Activated CD4-positive, alpha-beta memory T cell treated with anti-CD3 and anti-CD28 coated beads for 36 hours (primary cell): ENCODE measurements at regions of chr16 and their contacts with region 1.

Region 1: DNA sequence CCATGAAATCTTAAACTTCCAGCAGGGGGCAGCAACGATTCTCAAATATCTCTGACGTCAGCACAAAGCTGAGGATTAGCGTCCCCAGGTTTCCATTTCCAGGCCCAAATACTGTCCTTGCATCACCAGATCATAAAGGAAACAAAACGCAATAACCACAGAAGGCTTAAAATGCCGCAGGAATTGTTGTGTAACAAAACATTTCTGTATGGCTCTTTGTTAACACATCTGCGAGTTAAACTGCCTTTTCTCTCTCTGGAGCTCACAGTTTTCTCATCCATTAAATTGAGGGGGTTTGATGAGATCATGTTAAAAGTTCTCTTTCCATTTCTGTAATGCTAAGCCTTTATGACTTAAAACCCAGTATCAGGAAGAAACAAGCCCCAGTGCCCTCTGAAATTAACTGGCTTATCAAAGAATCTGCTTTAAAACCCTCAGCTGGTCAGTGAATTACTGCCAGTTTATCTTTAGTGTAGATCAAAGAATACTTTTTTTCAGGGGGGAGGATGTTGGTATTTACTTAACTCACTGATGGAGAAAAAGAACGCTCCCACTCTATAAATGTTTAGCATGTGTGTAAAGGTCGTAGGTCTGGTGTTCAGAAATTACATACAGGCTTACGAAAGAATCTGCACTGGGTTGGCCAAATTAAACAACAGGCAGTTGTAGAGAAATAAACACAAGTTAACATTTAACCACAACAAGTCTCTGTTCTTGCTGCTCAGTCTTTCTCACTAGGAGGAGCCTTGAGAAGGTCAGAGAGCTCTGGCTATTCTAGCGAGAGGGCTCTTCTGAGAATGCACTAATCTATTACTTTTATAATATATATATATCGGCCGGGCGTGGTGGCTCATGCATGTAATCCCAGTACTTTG is 10.6 kb upstream of the TERF2 start:
- DNase-seq: peak; percentile 74
- H3K4me3 Mint-ChIP-seq: no peak overlapping the region
- H3K27ac Mint-ChIP-seq: peak overlapping the region; percentile 58
- H3K4me1 Mint-ChIP-seq: peaks cover 11% of the 10 kb centered on the region
- H3K27me3 Mint-ChIP-seq: peaks cover 2% of the 10 kb centered on the region

Region 2: GRCh38 chr16:68995011-68995504 is 401.4 kb before region 1 on chr16:
- CTCF ChIA-PET with region 1: no interaction called
- POLR2A ChIA-PET with region 1: no interaction called
- intact Hi-C with region 1: no loop called
- DNase-seq: no peak
- H3K4me3 Mint-ChIP-seq: no peak overlapping the region
- H3K27ac Mint-ChIP-seq: no peak overlapping the region
- H3K4me1 Mint-ChIP-seq: no peaks in the 10 kb centered on the region
- H3K27me3 Mint-ChIP-seq: no peaks in the 10 kb centered on the region

Region 3: GRCh38 chr16:69381231-69381630 is 15.2 kb before region 1 on chr16:
- CTCF ChIA-PET with region 1: interaction called, 17 read pairs
- POLR2A ChIA-PET with region 1: interaction called, 3 read pairs
- intact Hi-C with region 1: no loop called
- DNase-seq: no peak
- H3K4me3 Mint-ChIP-seq: no peak overlapping the region
- H3K27ac Mint-ChIP-seq: peak overlapping the region; percentile 38
- H3K4me1 Mint-ChIP-seq: peaks cover 53% of the 10 kb centered on the region
- H3K27me3 Mint-ChIP-seq: no peaks in the 10 kb centered on the region

Region 4: DNA sequence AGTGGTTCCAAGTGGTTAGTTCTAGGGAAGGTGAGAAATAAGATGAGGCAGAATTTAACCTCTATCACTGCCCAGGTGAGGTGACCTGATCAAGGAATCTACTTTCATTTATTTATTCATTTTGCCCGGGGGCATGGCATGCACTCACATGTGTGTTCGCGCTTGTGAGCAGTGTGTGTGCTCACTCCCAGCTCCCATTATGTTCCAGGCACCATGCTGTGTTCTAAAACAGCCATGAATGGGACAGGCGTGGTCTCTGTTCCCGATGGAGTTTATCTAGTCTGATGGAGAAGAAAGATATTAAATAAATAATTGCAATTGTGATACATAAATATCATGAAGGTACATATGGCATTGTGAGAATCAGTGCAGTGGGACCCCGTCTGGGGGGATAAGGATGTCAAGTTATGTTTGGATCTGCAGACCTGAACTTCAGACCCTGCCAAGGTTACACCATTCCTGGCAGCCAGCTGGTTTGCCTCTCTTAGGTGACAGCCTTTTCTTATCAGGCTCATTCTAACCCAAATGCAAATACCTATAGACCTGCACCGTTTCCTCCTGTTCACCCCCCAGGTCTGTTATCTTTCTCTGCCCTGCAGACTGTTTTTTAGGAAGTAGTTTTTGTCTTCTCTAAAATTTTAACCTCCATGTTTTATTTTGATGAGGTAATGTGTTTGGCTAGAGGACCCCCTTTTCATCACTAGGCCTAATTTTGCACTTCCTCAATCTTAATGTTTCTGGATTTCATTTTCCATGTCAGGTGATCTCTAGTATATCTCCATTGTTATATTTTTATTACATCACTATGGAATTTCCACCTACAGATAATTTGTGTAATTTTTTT is 39.8 kb after region 1 on chr16:
- CTCF ChIA-PET with region 1: interaction called, 7 read pairs
- POLR2A ChIA-PET with region 1: no interaction called
- intact Hi-C with region 1: loop called (anchors 5 kb)
- DNase-seq: no peak
- H3K4me3 Mint-ChIP-seq: no peak overlapping the region
- H3K27ac Mint-ChIP-seq: no peak overlapping the region
- H3K4me1 Mint-ChIP-seq: peaks cover 78% of the 10 kb centered on the region
- H3K27me3 Mint-ChIP-seq: no peaks in the 10 kb centered on the region

Region 5: DNA sequence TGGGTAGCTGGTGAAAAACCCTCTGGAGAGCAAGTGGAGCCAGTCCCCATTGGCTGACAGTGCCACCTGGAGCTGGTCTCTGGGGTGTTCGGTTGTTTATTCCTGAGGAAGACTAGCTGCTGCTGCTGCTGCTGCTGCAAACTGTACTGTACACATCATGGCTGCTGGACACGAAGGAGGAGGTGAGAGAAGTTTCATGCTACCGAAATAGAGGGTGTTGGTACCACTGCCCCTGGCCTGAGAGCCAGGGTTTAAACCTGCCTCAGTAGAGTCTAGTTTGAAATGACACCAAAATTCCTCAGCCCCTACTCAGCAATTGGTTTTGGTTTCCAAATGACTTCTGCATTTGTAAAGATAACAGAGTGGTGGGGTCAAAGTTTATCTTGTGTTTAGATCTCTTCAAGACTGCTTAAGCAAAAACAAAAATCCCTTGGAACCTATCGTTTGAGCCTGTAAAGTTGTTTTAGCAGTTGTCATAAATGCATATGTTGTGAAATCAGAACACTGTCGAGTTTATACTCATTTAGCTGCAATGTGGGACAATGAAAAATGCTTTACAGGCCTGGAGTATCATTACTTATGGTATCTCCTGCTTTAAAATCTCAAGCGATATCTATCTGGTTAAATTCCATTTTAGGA is 68.8 kb after region 1 on chr16:
- CTCF ChIA-PET with region 1: interaction called, 9 read pairs
- POLR2A ChIA-PET with region 1: no interaction called
- intact Hi-C with region 1: loop called (anchors 5 kb)
- DNase-seq: peak; percentile 26
- H3K4me3 Mint-ChIP-seq: peak overlapping the region; percentile 3
- H3K27ac Mint-ChIP-seq: peak overlapping the region; percentile 44
- H3K4me1 Mint-ChIP-seq: peaks cover 51% of the 10 kb centered on the region
- H3K27me3 Mint-ChIP-seq: no peaks in the 10 kb centered on the region

Region 6: DNA sequence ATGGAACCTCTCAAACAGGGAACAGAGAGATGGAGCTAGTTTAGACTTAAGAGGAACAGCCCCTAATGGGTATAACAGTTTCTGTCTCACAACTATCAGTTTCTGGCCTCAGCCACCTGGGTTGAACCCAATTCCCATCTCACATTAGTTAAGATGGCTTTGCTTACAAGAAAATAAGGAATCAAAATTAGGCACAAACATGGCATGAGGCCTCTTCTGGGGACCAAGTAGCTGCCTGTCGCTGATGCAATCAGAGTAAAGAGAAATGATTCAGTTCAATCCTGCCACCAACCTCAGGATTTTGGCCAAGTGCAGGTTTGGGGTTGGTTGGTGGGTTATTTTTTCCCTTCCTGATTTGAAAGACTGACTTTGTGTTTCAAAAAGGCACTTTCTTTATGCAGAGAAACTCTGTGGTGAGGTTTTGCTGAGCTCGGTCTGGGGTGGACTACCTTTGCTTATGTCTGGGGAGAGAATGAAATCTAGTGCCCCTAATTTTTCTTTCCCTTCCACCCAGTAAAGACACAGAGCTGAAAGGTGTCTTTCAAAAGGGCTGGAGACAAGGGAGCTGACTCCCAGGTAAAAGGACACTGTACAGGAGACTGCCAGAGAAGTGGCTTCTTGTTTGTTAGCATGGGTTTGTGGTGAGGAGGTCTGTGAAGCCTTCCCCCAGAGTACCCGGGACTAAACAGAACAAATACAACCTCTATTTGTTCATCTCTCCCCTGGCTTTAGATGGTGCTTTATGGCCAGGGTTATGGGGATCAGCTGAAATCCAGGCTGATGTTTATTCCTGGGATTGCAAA is 124.6 kb after region 1 on chr16:
- CTCF ChIA-PET with region 1: no interaction called
- POLR2A ChIA-PET with region 1: no interaction called
- intact Hi-C with region 1: no loop called
- DNase-seq: peak; percentile 78
- H3K4me3 Mint-ChIP-seq: no peak overlapping the region
- H3K27ac Mint-ChIP-seq: peak overlapping the region; percentile 79
- H3K4me1 Mint-ChIP-seq: peaks cover 19% of the 10 kb centered on the region
- H3K27me3 Mint-ChIP-seq: no peaks in the 10 kb centered on the region

Region 7: DNA sequence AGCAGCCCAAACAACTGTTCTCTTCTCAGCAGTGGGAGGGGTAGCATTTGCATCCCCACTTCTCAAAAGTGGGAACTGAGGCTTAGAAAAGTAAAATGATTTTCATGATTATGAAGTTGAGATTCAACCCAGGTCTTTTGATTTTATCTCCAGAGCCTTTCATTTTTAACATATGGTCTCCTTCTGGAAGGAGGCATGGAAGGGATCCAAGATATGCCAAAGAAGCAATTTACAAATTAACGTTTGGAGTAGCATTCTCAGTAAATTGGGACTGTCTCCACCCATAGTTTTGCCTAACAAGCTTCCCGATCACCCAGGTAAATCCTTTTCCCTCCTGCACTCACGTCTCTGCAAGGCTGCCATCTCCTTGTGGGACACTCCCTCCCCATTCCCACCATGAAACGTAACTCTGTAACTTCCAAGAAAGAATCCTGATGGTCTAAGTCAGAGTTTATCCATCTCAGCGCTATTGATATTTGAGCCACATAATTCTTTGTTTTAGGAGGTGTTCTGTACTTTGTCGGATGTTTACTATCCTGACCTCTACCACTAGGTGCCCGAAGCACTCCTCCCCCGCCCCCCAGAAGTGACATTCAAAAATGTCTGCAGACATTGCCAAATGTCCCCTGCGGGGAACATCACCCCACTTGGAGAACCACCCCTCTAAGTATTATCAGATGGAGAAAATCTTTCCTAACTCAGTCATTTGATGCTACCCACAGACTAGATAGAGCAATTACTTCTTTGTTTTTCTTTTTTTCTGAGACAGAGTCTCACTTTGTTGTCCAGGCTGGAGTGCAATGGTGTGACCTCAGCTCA is 136.4 kb after region 1 on chr16:
- CTCF ChIA-PET with region 1: no interaction called
- POLR2A ChIA-PET with region 1: no interaction called
- intact Hi-C with region 1: no loop called
- DNase-seq: no peak
- H3K4me3 Mint-ChIP-seq: no peak overlapping the region
- H3K27ac Mint-ChIP-seq: no peak overlapping the region
- H3K4me1 Mint-ChIP-seq: peaks cover 32% of the 10 kb centered on the region
- H3K27me3 Mint-ChIP-seq: no peaks in the 10 kb centered on the region

Region 8: GRCh38 chr16:69754469-69755310 is 358.3 kb after region 1 on chr16 and contains the start of gene NOB1:
- CTCF ChIA-PET with region 1: interaction called, 29 read pairs
- POLR2A ChIA-PET with region 1: interaction called, 4 read pairs
- intact Hi-C with region 1: loop called (anchors 1 kb)
- DNase-seq: peak; percentile 98
- H3K4me3 Mint-ChIP-seq: peak within 1 kb of the TSS; percentile 100
- H3K27ac Mint-ChIP-seq: peak within 1 kb of the TSS; percentile 98
- H3K4me1 Mint-ChIP-seq: peaks cover 23% of the 10 kb centered on the region
- H3K27me3 Mint-ChIP-seq: no peaks in the 10 kb centered on the region
- total RNA-seq, gene NOB1: 92.4 to 95.2 TPM